ENCODE measurements at regions of chr6 and their contacts with region 1.

Region 1: GRCh38 chr6:137341681-137342195 is 122.6 kb upstream of the IFNGR1 start:
- DNase-seq: no peak
- ATAC-seq: peak; percentile 70
- H3K4me3 ChIP-seq: no peak overlapping the region
- H3K27ac ChIP-seq: no peak overlapping the region
- H3K4me1 ChIP-seq: no peaks in the 10 kb centered on the region; the same call in 1 of the 2 replicates
- H3K27me3 ChIP-seq: no peaks in the 10 kb centered on the region; a peak in 2 of 4 replicates
- CTCF ChIP-seq: peak; percentile 32 to 49 (median 40); a peak in 3 of 6 replicates
- EP300 ChIP-seq: no peak
- POLR2A ChIP-seq: no peak
- RAD21 ChIP-seq: peak; percentile 57

Region 2: DNA sequence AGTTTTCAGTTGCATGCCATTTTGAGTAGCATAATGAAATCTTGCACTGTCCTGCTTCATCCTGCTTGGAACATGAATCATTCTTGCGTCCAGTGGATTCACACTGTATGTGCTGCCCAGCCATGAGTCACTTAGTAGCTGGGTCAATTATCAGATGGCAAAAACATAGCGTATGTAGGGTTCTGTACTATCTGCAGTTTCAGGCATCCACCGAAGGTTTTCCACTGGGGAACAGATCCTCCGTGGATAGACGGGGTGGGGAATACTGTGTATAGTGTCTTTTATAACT is 229.7 kb before region 1 on chr6:
- CTCF ChIA-PET with region 1: no interaction called
- POLR2A ChIA-PET with region 1: no interaction called
- RAD21 ChIA-PET with region 1: no interaction called
- SMC1A ChIA-PET with region 1: no interaction called
- in situ Hi-C with region 1: no loop called
- intact Hi-C with region 1: no loop called
- DNase-seq: no peak
- ATAC-seq: no peak; the same call in 2 of the 3 replicates
- H3K4me3 ChIP-seq: no peak overlapping the region
- H3K27ac ChIP-seq: no peak overlapping the region
- H3K4me1 ChIP-seq: peaks cover 14% of the 10 kb centered on the region
- H3K27me3 ChIP-seq: no peaks in the 10 kb centered on the region
- CTCF ChIP-seq: no peak
- EP300 ChIP-seq: no peak
- POLR2A ChIP-seq: no peak
- RAD21 ChIP-seq: no peak

Region 3: DNA sequence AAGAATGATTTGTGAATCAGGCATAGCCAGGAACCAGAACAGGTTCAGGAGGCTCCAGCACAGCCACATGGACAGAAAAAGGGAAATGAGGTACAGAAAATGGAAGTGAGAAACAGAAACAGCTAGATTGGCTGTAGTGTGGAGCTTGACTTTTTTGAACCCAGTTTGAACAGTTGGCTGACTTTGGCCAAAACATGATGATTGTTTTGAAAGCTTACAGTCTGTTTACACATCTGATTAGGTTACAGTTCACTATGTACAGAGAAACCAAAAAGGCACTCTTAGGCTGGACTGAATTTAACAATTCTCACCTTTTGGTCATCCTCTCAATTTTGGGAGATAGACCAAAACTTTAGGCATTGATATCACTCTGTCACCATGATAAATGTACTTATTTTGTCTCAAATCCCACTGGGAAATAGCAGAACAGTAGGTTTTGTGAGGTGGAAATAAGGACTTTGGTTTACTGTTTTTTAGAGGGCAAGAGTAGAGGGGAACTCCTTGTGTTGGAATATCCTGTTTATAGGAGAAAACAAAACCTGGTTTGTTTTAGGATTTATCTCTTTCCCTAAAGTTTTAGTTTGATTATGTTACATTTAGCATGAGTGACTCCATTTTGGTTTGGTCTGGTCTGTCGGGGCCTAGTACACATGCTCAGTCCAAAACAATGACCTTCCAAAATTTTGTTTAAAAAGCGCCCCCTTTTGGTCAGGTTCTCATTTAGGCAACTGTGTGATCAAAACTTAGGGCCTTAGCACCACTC is 29.3 kb after region 1 on chr6:
- CTCF ChIA-PET with region 1: interaction called, 7 read pairs
- POLR2A ChIA-PET with region 1: no interaction called
- RAD21 ChIA-PET with region 1: no interaction called
- SMC1A ChIA-PET with region 1: interaction called, 10 read pairs
- in situ Hi-C with region 1: no loop called
- intact Hi-C with region 1: no loop called
- DNase-seq: peak; percentile 34
- ATAC-seq: peak; percentile 98
- H3K4me3 ChIP-seq: no peak overlapping the region
- H3K27ac ChIP-seq: no peak overlapping the region
- H3K4me1 ChIP-seq: peaks cover 12% of the 10 kb centered on the region
- H3K27me3 ChIP-seq: no peaks in the 10 kb centered on the region
- CTCF ChIP-seq: peak in 2 of 3 experiments; percentile 10 to 28; a peak in 2 of 6 replicates
- EP300 ChIP-seq: peak; percentile 15 to 19; a peak in 1 of 4 replicates
- POLR2A ChIP-seq: no peak
- RAD21 ChIP-seq: no peak

Region 4: DNA sequence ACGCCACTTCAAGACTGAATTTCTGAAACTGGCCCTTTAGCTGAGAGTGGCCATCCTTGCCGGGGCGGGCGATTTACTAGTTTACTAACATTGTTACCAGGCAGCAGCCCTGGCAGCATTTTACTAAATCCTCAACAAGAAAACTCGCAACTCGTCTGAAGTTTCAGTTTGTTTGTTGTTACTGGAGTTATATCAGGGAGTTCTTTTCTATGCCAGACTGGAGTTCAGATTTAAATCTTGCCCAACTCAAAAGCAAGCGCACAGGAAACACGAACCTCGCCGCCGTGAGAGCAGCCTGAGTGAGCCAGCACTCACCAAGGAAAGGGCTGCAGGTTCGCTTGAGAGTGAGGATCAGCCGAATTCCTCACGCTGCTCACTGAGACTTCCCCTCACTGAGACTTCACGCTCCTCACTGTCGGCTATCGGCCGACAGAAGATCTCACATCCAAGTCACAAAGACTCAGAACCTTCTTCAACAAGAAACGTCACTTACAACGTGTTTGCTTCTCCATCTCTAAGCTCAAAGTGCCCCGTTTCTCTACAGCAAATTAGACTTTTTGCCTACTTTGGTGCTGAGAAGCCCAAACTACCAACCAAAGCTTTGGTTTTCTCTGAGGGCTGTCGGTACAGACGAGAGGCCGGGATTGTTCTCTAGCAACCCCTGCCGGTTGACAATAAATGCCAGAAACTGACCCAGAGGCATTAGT is 73.5 kb after region 1 on chr6:
- CTCF ChIA-PET with region 1: interaction called, 77 read pairs
- POLR2A ChIA-PET with region 1: no interaction called
- RAD21 ChIA-PET with region 1: interaction called, 14 read pairs
- SMC1A ChIA-PET with region 1: interaction called, 49 read pairs
- in situ Hi-C with region 1: no loop called
- intact Hi-C with region 1: loop called (anchors 2 kb)
- DNase-seq: no peak
- ATAC-seq: peak; percentile 99
- H3K4me3 ChIP-seq: peak overlapping the region; percentile 62
- H3K27ac ChIP-seq: no peak overlapping the region
- H3K4me1 ChIP-seq: peaks cover 4% of the 10 kb centered on the region
- H3K27me3 ChIP-seq: peaks cover 0 to 3% of the 10 kb centered on the region in 2 experiments; a peak in 1 of 4 replicates
- CTCF ChIP-seq: peak; percentile 79 to 89 (median 85)
- EP300 ChIP-seq: no peak
- POLR2A ChIP-seq: no peak
- RAD21 ChIP-seq: peak; percentile 84

Region 5: GRCh38 chr6:137589067-137589848 is 247.5 kb after region 1 on chr6:
- CTCF ChIA-PET with region 1: interaction called, 6 read pairs
- POLR2A ChIA-PET with region 1: no interaction called
- RAD21 ChIA-PET with region 1: no interaction called
- SMC1A ChIA-PET with region 1: no interaction called
- in situ Hi-C with region 1: no loop called
- intact Hi-C with region 1: loop called (anchors 1 kb)
- DNase-seq: peak; percentile 74
- ATAC-seq: peak; percentile 100
- H3K4me3 ChIP-seq: 0 out of 2 replicates have a peak overlapping the region, but pooled peaks have one; percentile 19
- H3K27ac ChIP-seq: no peak overlapping the region
- H3K4me1 ChIP-seq: peaks cover 2% of the 10 kb centered on the region; the same call in 1 of the 2 replicates
- H3K27me3 ChIP-seq: no peaks in the 10 kb centered on the region
- CTCF ChIP-seq: peak; percentile 62 to 98 (median 81)
- EP300 ChIP-seq: no peak
- POLR2A ChIP-seq: no peak
- RAD21 ChIP-seq: peak; percentile 72

Region 6: DNA sequence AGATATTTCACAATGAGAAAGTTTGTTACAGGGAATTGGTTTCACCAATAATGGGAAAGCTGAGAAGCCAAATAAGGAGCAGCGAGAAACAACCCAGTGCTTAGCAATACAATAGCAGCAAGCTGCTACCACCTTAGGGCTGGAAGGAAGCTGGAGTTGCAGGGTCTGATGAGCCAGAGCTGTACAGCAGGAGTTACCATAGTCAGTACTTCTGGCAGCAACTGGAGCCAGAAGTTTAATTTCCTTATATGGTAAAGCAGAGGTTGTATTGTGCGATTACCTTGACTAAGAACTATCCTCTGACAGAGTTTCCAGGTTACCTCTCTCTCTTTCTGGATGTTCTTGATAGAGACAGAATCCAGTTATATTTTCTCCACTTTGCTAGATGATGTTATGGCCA is 289.6 kb after region 1 on chr6:
- CTCF ChIA-PET with region 1: interaction called, 11 read pairs
- POLR2A ChIA-PET with region 1: no interaction called
- RAD21 ChIA-PET with region 1: no interaction called
- SMC1A ChIA-PET with region 1: interaction called, 4 read pairs
- in situ Hi-C with region 1: no loop called
- intact Hi-C with region 1: no loop called
- DNase-seq: no peak
- ATAC-seq: peak; percentile 81
- H3K4me3 ChIP-seq: no peak overlapping the region
- H3K27ac ChIP-seq: peak overlapping the region; percentile 76
- H3K4me1 ChIP-seq: peaks cover 46% of the 10 kb centered on the region
- H3K27me3 ChIP-seq: no peaks in the 10 kb centered on the region
- CTCF ChIP-seq: no peak
- EP300 ChIP-seq: no peak
- POLR2A ChIP-seq: no peak
- RAD21 ChIP-seq: no peak

Region 7: DNA sequence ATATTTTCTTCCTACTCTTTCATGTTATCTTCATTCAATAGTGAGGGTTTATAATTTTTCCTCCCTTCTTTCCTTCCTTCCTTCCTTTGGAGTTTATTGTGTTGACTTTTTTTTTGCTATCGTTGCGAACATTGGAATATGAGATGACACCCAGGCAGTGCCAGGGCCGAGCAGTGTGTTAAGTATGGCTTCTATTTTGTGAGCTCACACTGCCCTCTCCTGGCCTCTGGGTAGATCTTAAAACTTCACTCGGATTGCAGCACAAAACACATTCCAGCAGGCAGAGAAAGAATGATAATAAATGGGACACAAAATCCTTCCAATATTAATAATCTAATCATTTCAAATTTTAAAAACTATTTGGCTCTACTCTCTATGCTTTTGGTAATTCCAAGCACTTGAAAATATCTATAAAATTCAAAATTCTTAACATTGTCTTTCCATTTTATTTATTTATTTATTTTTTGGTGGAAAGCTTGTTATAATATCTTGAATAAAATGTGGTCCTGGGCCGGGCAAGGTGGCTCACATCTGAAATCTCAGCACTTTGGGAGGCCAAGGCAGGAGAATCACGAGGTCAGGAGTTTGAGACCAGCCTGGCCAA is 299.8 kb after region 1 on chr6:
- CTCF ChIA-PET with region 1: interaction called, 8 read pairs
- POLR2A ChIA-PET with region 1: no interaction called
- RAD21 ChIA-PET with region 1: interaction called, 7 read pairs
- SMC1A ChIA-PET with region 1: interaction called, 16 read pairs
- in situ Hi-C with region 1: no loop called
- intact Hi-C with region 1: loop called (anchors 1 kb)
- DNase-seq: no peak
- ATAC-seq: peak; percentile 79
- H3K4me3 ChIP-seq: no peak overlapping the region
- H3K27ac ChIP-seq: no peak overlapping the region
- H3K4me1 ChIP-seq: peaks cover 21% of the 10 kb centered on the region
- H3K27me3 ChIP-seq: no peaks in the 10 kb centered on the region
- CTCF ChIP-seq: peak; percentile 53 to 83 (median 65)
- EP300 ChIP-seq: no peak
- POLR2A ChIP-seq: no peak
- RAD21 ChIP-seq: peak; percentile 91

Measured in GM12878 (cell line).